OCI-LY7 (cell line): ENCODE measurements at regions of chr1 and their contacts with region 1.

Region 1: GRCh38 chr1:9942939-9943788 is at the starts of genes LZIC and NMNAT1:
- DNase-seq: peak; percentile 96
- H3K4me3 ChIP-seq: peak within 1 kb of the TSS; percentile 89
- H3K27ac ChIP-seq: peak within 1 kb of the TSS; percentile 74
- H3K4me1 ChIP-seq: peaks cover 10% of the 10 kb centered on the region
- CTCF ChIP-seq: no peak
- total RNA-seq, gene LZIC: 19.1 and 29.3 TPM in 2 replicates
- total RNA-seq, gene NMNAT1: 3.8 and 5.4 TPM in 2 replicates

Region 2: GRCh38 chr1:9910425-9911178 is 32.6 kb before region 1 on chr1:
- CTCF ChIA-PET with region 1: no interaction called
- POLR2A ChIA-PET with region 1: interaction called, 4 read pairs
- intact Hi-C with region 1: loop called (anchors 2 kb)
- DNase-seq: peak; percentile 99
- H3K4me3 ChIP-seq: peak overlapping the region; percentile 70
- H3K27ac ChIP-seq: peak overlapping the region; percentile 85
- H3K4me1 ChIP-seq: peaks cover 16% of the 10 kb centered on the region
- CTCF ChIP-seq: no peak

Region 3: DNA sequence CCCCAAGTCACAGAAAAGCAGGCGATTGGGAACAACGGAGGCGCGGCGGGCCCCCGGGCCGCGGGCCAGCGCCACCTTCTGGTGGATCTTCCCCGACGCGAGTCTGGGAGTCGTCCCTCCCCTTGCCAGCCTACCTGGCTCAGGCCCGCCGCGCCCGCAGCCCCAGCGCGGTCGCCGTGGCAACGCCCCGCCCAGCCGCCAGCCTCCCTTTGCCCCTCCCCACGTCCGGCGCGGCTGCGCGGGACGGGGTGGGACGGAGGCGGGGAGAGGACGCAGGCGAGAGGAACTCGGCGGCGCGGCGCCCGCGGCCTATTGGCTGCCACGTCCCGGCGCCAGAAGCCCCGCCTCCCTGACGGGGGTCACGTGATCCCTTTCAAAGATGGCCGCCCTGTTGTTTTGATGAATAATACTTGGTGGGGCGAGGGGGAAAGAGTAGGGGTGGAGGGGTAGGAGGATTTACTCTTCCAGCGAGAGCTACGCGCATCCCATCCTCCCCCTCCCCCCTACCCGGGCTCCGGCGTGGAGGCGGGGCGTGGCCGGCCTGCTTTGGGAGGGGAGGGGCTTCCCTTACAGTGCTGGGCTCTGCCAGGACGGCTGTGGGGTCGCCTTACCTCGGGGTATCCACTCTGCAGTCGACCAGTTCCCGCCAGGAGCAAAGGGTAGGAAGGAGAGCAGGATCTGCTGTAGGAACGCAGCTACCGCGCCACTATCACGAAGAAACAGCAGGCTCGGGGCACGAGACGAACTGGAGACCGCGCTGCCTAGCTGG is 89.6 kb after region 1 on chr1 and contains the start of gene UBE4B:
- CTCF ChIA-PET with region 1: no interaction called
- POLR2A ChIA-PET with region 1: no interaction called
- intact Hi-C with region 1: loop called (anchors 2 kb)
- DNase-seq: peak; percentile 98
- H3K4me3 ChIP-seq: peak within 1 kb of the TSS; percentile 98
- H3K27ac ChIP-seq: peak within 1 kb of the TSS; percentile 80
- H3K4me1 ChIP-seq: peaks cover 16% of the 10 kb centered on the region
- CTCF ChIP-seq: peak; percentile 84
- total RNA-seq, gene UBE4B: 19.7 and 21.5 TPM in 2 replicates

Region 4: GRCh38 chr1:10152709-10153284 is 209.6 kb after region 1 on chr1:
- CTCF ChIA-PET with region 1: no interaction called
- POLR2A ChIA-PET with region 1: no interaction called
- intact Hi-C with region 1: loop called (anchors 10 kb)
- DNase-seq: peak; percentile 21
- H3K4me3 ChIP-seq: no peak overlapping the region
- H3K27ac ChIP-seq: no peak overlapping the region
- H3K4me1 ChIP-seq: no peaks in the 10 kb centered on the region
- CTCF ChIP-seq: peak; percentile 77